MCF 10A (cell line): ENCODE measurements at regions of chr2 and their contacts with region 1.

Region 1: GRCh38 chr2:105403785-105404698 is 5.2 kb upstream of the FHL2 start:
- DNase-seq: peak; percentile 98
- H3K4me3 Mint-ChIP-seq: peak overlapping the region; percentile 63
- H3K27ac Mint-ChIP-seq: peak overlapping the region; percentile 94
- H3K4me1 Mint-ChIP-seq: peaks cover 41% of the 10 kb centered on the region
- H3K27me3 Mint-ChIP-seq: no peaks in the 10 kb centered on the region
- CTCF ChIP-seq: peak; percentile 36

Region 2: GRCh38 chr2:105388971-105389381 is 15.1 kb before region 1 on chr2:
- CTCF ChIA-PET with region 1: interaction called, 10 read pairs
- POLR2A ChIA-PET with region 1: interaction called, 119 read pairs
- intact Hi-C with region 1: no loop called
- DNase-seq: peak; percentile 72
- H3K4me3 Mint-ChIP-seq: no peak overlapping the region
- H3K27ac Mint-ChIP-seq: peak overlapping the region; percentile 9
- H3K4me1 Mint-ChIP-seq: peaks cover 30% of the 10 kb centered on the region
- H3K27me3 Mint-ChIP-seq: no peaks in the 10 kb centered on the region
- CTCF ChIP-seq: no peak

Region 3: DNA sequence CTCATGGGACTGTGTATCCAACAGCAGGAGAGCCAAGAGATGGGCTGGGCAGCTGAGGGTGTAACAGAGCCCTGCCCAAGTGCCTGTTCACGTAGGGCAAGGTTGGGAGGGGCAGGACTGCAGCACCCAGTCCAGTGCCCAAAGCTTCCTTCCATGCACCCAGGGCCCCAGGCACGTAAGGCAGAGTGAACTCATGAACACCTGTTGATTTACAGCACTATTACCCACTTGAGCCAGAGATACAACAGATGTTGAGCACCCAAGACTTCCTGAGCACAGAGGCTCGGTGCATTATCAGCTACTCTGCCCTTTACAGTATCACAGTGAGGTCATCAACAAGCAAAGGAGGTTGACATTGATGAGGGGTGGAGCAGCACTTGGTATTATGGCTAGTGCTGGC is 45.0 kb after region 1 on chr2:
- CTCF ChIA-PET with region 1: no interaction called
- POLR2A ChIA-PET with region 1: interaction called, 37 read pairs
- intact Hi-C with region 1: no loop called
- DNase-seq: no peak
- H3K4me3 Mint-ChIP-seq: no peak overlapping the region
- H3K27ac Mint-ChIP-seq: no peak overlapping the region
- H3K4me1 Mint-ChIP-seq: peaks cover 13% of the 10 kb centered on the region
- H3K27me3 Mint-ChIP-seq: no peaks in the 10 kb centered on the region
- CTCF ChIP-seq: no peak

Region 4: DNA sequence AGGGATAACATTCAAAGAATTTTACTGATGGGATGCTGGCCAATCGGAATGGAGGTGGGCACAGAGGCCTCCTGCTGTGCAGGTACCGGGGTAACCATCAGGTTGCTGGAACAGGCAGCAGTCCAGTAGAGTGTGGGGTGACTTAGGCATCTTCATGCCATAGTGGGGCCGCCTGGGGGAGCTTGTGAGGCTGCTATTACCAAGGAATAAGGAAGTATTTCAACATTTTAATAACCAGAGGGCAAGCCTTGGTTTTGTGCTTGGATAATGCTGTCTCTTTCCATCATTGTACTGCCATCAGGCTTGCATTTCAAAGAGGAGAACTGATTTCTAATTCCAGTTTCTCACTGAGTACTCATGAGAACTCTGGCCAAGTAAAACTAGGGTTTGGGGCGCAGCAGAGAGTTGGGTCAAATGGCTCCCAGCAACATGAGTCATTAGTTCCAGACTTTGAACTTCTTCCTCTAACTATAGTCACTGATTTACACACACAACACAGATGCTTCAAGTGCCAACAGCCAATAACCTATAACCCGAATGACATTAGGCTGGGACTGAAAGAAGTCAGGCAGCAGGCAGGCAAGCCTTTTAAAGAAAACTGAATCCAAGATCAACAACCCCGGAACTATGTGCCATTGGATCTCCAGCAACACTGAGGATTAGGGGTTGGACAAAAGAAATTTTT is 50.9 kb after region 1 on chr2:
- CTCF ChIA-PET with region 1: interaction called, 3 read pairs
- POLR2A ChIA-PET with region 1: interaction called, 37 read pairs
- intact Hi-C with region 1: loop called (anchors 1 kb)
- DNase-seq: peak; percentile 95
- H3K4me3 Mint-ChIP-seq: peak overlapping the region; percentile 15
- H3K27ac Mint-ChIP-seq: peak overlapping the region; percentile 91
- H3K4me1 Mint-ChIP-seq: peaks cover 28% of the 10 kb centered on the region
- H3K27me3 Mint-ChIP-seq: no peaks in the 10 kb centered on the region
- CTCF ChIP-seq: peak; percentile 68